PC-3 (cell line): ENCODE measurements at regions of chr1 and their contacts with region 1.

Region 1: DNA sequence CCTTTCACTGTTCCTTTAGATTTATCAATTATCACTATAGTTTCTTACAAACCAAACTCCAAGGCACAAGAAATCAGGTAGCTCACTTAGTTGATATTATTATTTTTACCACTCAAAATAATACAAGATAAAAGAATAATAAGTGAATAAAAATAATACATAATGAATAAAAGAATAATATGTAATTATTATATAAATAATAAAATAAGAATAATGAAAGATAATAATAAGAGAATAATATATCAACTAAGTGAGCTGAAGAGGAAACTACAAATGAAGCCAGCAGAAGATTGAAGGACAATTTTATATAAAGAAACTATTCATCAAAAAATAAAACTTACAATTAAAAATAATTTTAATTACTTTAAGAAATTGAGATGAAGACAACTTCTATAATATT is 90.6 kb downstream of the LRRIQ3 start:
- DNase-seq: no peak
- ATAC-seq: no peak
- H3K4me3 ChIP-seq: no peak overlapping the region
- H3K27ac ChIP-seq: no peak overlapping the region
- H3K4me1 ChIP-seq: no peaks in the 10 kb centered on the region
- H3K27me3 ChIP-seq: peaks cover 15% of the 10 kb centered on the region
- CTCF ChIP-seq: no peak

Region 2: DNA sequence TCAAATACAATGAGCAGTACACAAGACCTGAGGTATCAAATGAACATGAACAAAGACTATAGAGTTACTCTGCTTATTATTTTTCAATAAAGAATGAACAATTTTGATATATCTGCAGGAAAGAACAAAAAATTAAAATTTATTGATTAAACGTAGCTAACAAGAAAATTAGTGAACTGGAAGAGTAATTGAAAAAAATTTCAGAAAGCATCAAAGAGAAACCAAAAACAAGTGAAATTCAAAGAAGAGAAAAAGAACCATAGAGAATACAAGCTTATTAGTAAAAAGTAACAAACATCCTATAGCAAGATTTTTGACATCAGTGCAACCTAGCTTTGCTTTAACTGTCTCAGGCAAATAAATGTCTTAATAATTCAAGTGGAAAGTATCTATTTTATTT is 16.0 kb before region 1 on chr1:
- CTCF ChIA-PET with region 1: no interaction called
- POLR2A ChIA-PET with region 1: interaction called, 10 read pairs
- intact Hi-C with region 1: no loop called
- DNase-seq: no peak
- ATAC-seq: no peak
- H3K4me3 ChIP-seq: no peak overlapping the region
- H3K27ac ChIP-seq: no peak overlapping the region
- H3K4me1 ChIP-seq: no peaks in the 10 kb centered on the region
- H3K27me3 ChIP-seq: no peaks in the 10 kb centered on the region
- CTCF ChIP-seq: no peak

Region 3: GRCh38 chr1:74160046-74160445 is 52.7 kb after region 1 on chr1:
- CTCF ChIA-PET with region 1: no interaction called
- POLR2A ChIA-PET with region 1: no interaction called
- intact Hi-C with region 1: no loop called
- DNase-seq: no peak
- ATAC-seq: no peak
- H3K4me3 ChIP-seq: no peak overlapping the region
- H3K27ac ChIP-seq: no peak overlapping the region
- H3K4me1 ChIP-seq: no peaks in the 10 kb centered on the region
- H3K27me3 ChIP-seq: peaks cover 4% of the 10 kb centered on the region; the same call in 1 of the 2 replicates
- CTCF ChIP-seq: no peak